HepG2 (cell line): ENCODE measurements at regions of chr17 and their contacts with region 1.

Region 1: GRCh38 chr17:55264645-55265298 is at the start of gene HLF:
- DNase-seq: peak; percentile 76
- ATAC-seq: peak; percentile 86
- H3K4me3 ChIP-seq: peak within 1 kb of the TSS; percentile 81 to 93 (median 83)
- H3K27ac ChIP-seq: peak within 1 kb of the TSS; percentile 84
- H3K4me1 ChIP-seq: peaks cover 15% of the 10 kb centered on the region
- H3K27me3 ChIP-seq: no peaks in the 10 kb centered on the region; a peak in 1 of 5 replicates
- CTCF ChIP-seq: peak; percentile 4; the same call in 1 of the 2 replicates
- EP300 ChIP-seq: peak; percentile 40 to 58; a peak in 2 of 4 replicates
- POLR2A ChIP-seq: peak; percentile 50 to 87; a peak in 3 of 4 replicates
- RAD21 ChIP-seq: peak; percentile 50
- total RNA-seq, gene HLF: 197 and 202 TPM in 2 replicates

Region 2: DNA sequence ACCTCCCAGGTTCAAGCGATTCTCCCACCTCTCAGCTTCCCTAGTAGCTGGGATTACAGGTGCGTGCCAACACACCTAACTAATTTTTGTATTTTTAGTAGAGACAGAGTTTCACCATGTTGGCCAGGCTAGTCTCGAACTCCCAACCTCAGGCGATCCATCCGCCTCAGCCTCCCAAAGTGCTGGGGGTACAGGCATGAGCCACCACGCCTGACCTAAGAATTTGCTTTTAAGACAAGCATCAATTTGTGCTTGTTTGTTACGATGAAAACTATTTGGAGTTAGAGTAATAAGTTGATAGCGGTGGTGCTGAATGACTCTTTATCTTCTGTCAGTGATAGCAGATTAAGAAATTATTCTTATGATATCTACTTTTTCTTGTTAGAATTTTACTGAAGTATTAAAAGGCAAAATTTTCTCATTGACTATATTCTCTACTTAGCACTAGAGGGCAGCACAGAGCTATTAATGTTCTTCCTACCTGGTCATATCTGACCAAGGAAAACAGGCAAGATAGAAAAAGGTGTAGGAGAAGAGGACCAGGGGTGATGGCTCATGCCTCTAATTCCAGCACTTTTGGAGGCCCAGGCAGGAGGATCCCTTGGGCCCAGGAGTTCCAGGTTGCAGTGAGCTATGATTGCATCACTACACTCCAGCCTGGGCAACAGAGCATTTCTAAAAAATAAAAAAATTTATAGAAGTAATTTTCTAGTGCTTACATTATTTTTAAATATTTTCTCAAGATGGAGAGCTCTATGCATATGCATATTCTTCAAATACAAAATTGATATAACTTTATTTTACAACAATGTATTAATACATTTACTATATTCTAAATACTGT is 271.8 kb before region 1 on chr17:
- CTCF ChIA-PET with region 1: no interaction called
- POLR2A ChIA-PET with region 1: no interaction called
- in situ Hi-C with region 1: no loop called
- intact Hi-C with region 1: loop called (anchors 1 kb)
- DNase-seq: peak; percentile 65
- ATAC-seq: peak; percentile 86
- H3K4me3 ChIP-seq: no peak overlapping the region
- H3K27ac ChIP-seq: no peak overlapping the region
- H3K4me1 ChIP-seq: no peaks in the 10 kb centered on the region
- H3K27me3 ChIP-seq: no peaks in the 10 kb centered on the region
- CTCF ChIP-seq: peak; percentile 74
- EP300 ChIP-seq: no peak
- POLR2A ChIP-seq: no peak
- RAD21 ChIP-seq: peak; percentile 57

Region 3: DNA sequence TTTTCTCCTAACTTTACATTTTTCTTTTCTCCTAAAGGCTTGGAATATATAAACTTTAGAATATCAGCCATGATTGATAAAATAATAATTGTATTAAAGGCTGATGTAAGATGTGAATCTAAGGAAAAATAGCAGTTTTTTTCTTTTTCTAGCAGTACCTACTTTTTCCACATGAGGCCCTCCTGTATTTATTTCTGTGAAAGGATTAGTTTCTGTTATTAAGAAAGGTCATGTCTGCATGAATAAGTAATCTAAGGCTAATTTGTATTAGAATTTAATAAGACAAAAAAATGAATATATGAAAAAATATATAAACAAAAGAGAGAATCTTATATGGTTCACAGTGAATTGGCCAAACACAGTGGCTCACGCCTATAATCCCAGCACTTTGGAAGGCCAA is 210.9 kb before region 1 on chr17:
- CTCF ChIA-PET with region 1: no interaction called
- POLR2A ChIA-PET with region 1: no interaction called
- in situ Hi-C with region 1: no loop called
- intact Hi-C with region 1: loop called (anchors 2 kb)
- DNase-seq: no peak
- ATAC-seq: no peak
- H3K4me3 ChIP-seq: no peak overlapping the region
- H3K27ac ChIP-seq: no peak overlapping the region
- H3K4me1 ChIP-seq: no peaks in the 10 kb centered on the region
- H3K27me3 ChIP-seq: no peaks in the 10 kb centered on the region
- CTCF ChIP-seq: peak; percentile 46
- EP300 ChIP-seq: no peak
- POLR2A ChIP-seq: no peak
- RAD21 ChIP-seq: peak; percentile 43; the same call in 1 of the 2 replicates

Region 4: DNA sequence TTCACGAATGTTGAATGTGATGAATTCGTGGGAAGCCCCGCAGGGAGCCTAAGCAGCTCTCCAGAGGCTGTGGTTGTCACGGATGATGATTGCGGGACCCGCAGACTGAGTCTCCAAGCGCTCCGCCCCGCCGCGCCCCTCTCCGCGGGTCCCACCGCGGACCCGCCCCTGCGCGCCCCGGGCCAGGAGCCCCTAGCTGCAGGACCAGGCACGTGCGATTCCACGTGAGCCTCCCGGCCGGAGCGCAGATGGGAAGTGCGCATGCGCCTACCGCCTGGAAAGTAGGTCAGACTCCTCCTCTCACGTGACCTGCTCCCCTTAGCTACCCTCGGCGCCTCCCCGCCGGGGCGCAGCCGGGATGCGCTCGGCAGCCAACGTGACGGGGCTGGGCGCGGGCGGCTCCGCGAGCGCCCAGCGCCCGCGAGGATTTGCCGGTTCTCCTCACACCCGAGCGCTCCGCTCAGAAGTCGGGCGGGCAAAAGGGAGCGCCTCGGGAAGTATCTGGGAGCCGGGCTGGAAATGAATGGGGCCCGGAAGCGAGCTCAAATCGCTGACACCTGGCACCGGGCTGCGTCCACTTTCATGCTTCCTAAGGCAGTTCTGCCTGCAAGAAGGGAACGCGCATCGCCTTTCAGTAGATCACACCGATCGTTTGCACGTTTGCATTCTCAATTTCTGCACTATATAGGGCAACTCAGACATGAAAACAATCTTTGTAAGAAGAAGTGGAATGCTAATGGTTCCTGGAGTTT is 26.4 kb before region 1 on chr17:
- CTCF ChIA-PET with region 1: no interaction called
- POLR2A ChIA-PET with region 1: interaction called, 64 read pairs
- in situ Hi-C with region 1: no loop called
- intact Hi-C with region 1: loop called (anchors 1 kb)
- DNase-seq: peak; percentile 94
- ATAC-seq: peak; percentile 99
- H3K4me3 ChIP-seq: peak overlapping the region; percentile 61 to 77 (median 70)
- H3K27ac ChIP-seq: peak overlapping the region; percentile 72
- H3K4me1 ChIP-seq: peaks cover 23% of the 10 kb centered on the region
- H3K27me3 ChIP-seq: no peaks in the 10 kb centered on the region; a peak in 1 of 5 replicates
- CTCF ChIP-seq: peak; percentile 22; the same call in 1 of the 2 replicates
- EP300 ChIP-seq: peak in 1 of 2 experiments; percentile 30; a peak in 2 of 4 replicates
- POLR2A ChIP-seq: peak; percentile 66
- RAD21 ChIP-seq: peak; percentile 26

Region 5: GRCh38 chr17:55295411-55296170 is 30.8 kb after region 1 on chr17:
- CTCF ChIA-PET with region 1: interaction called, 3 read pairs
- POLR2A ChIA-PET with region 1: interaction called, 626 read pairs
- in situ Hi-C with region 1: no loop called
- intact Hi-C with region 1: no loop called
- DNase-seq: peak; percentile 77
- ATAC-seq: peak; percentile 63
- H3K4me3 ChIP-seq: no peak overlapping the region
- H3K27ac ChIP-seq: peak overlapping the region; percentile 38
- H3K4me1 ChIP-seq: peaks cover 100% of the 10 kb centered on the region
- H3K27me3 ChIP-seq: no peaks in the 10 kb centered on the region
- CTCF ChIP-seq: peak; percentile 83
- EP300 ChIP-seq: no peak; a peak in 1 of 4 replicates
- POLR2A ChIP-seq: peak; percentile 52 to 56; a peak in 2 of 4 replicates
- RAD21 ChIP-seq: peak; percentile 83

Region 6: DNA sequence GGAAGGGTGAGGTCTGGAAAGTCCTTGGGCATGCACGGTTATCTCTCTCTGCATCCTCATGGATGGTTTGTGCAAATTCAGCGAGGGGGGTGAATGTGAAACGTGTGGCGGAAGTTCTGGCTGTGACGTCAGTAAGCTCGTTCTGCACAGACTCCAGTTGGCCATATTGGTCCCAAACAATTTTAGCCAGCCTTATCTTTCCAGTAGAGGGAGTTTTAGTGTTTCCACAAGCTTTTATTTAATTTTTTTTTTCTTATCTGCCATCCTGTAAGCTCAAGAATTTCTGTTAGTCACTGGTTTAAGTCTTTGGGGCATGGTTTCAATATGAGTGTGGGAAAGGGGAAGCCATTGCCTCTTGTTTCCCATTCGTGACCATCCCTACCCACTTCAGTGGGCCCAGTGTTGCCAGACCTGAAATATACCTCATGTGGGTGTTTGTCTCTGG is 39.0 kb after region 1 on chr17:
- CTCF ChIA-PET with region 1: no interaction called
- POLR2A ChIA-PET with region 1: interaction called, 6 read pairs
- in situ Hi-C with region 1: no loop called
- intact Hi-C with region 1: loop called (anchors 2 kb)
- DNase-seq: no peak
- ATAC-seq: no peak
- H3K4me3 ChIP-seq: no peak overlapping the region; a peak in 1 of 6 replicates
- H3K27ac ChIP-seq: peak overlapping the region; percentile 86
- H3K4me1 ChIP-seq: peaks cover 100% of the 10 kb centered on the region
- H3K27me3 ChIP-seq: no peaks in the 10 kb centered on the region
- CTCF ChIP-seq: peak; percentile 4; the same call in 1 of the 2 replicates
- EP300 ChIP-seq: no peak
- POLR2A ChIP-seq: no peak; a peak in 2 of 4 replicates
- RAD21 ChIP-seq: no peak